ENCODE measurements at regions of chr14 and their contacts with region 1.

Region 1: GRCh38 chr14:33457021-33457420 is 493.9 kb downstream of the EGLN3 start:
- ATAC-seq: peak in 1 of 8 experiments; percentile 80
- H3K4me3 ChIP-seq: no peak overlapping the region
- H3K27ac ChIP-seq: no peak overlapping the region
- H3K4me1 ChIP-seq: peaks cover 14 to 26% of the 10 kb centered on the region in 2 donors

Region 2: GRCh38 chr14:33657476-33657875 is 200.5 kb after region 1 on chr14:
- in situ Hi-C with region 1: loop called in 1 of 9 experiments (anchors 25 kb)
- ATAC-seq: no peak
- H3K4me3 ChIP-seq: no peak overlapping the region
- H3K27ac ChIP-seq: no peak overlapping the region
- H3K4me1 ChIP-seq: peaks cover 0 to 3% of the 10 kb centered on the region in 2 donors